Ascending aorta (tissue), 2 donors: ENCODE measurements at regions of chr15 and their contacts with region 1.

Region 1: GRCh38 chr15:72783563-72784237 is at the start of gene ADPGK:
- DNase-seq: peak; percentile 73 to 94
- H3K4me3 ChIP-seq: peak within 1 kb of the TSS; percentile 76 to 80
- H3K27ac ChIP-seq: peak within 1 kb of the TSS; percentile 94 to 96
- H3K4me1 ChIP-seq: peaks cover 2 to 23% of the 10 kb centered on the region in 2 donors
- H3K27me3 ChIP-seq: no peaks in the 10 kb centered on the region
- CTCF ChIP-seq: peak in 1 of 3 experiments; percentile 1
- total RNA-seq, gene ADPGK: 24.8 TPM

Region 2: GRCh38 chr15:72473614-72474465 is 309.9 kb before region 1 on chr15 and contains the start of gene ARIH1:
- intact Hi-C with region 1: loop called (anchors 10 kb)
- DNase-seq: peak; percentile 86 to 98
- H3K4me3 ChIP-seq: peak within 1 kb of the TSS; percentile 73 to 100
- H3K27ac ChIP-seq: peak within 1 kb of the TSS; percentile 97 to 100
- H3K4me1 ChIP-seq: peaks cover 0 to 41% of the 10 kb centered on the region in 2 donors
- H3K27me3 ChIP-seq: no peaks in the 10 kb centered on the region
- CTCF ChIP-seq: peak in 2 of 3 experiments; percentile 8 to 22
- total RNA-seq, gene ARIH1: 109 TPM

Region 3: GRCh38 chr15:73051811-73052678 is 268.3 kb after region 1 on chr15 and contains the start of gene NEO1:
- intact Hi-C with region 1: loop called (anchors 1 kb)
- DNase-seq: peak; percentile 49 to 90
- H3K4me3 ChIP-seq: peak within 1 kb of the TSS; percentile 84 to 87
- H3K27ac ChIP-seq: peak within 1 kb of the TSS; percentile 89 to 91
- H3K4me1 ChIP-seq: no peaks in the 10 kb centered on the region
- H3K27me3 ChIP-seq: no peaks in the 10 kb centered on the region
- CTCF ChIP-seq: peak in 1 of 3 experiments; percentile 13
- total RNA-seq, gene NEO1: 21.8 TPM

Region 4: GRCh38 chr15:73240866-73241499 is 457.3 kb after region 1 on chr15:
- intact Hi-C with region 1: loop called (anchors 10 kb)
- DNase-seq: peak in 1 of 2 donors; percentile 86
- H3K4me3 ChIP-seq: no peak overlapping the region
- H3K27ac ChIP-seq: no peak overlapping the region
- H3K4me1 ChIP-seq: peaks cover 0 to 7% of the 10 kb centered on the region in 2 donors
- H3K27me3 ChIP-seq: no peaks in the 10 kb centered on the region
- CTCF ChIP-seq: peak; percentile 68 to 90 (median 85)

Region 5: DNA sequence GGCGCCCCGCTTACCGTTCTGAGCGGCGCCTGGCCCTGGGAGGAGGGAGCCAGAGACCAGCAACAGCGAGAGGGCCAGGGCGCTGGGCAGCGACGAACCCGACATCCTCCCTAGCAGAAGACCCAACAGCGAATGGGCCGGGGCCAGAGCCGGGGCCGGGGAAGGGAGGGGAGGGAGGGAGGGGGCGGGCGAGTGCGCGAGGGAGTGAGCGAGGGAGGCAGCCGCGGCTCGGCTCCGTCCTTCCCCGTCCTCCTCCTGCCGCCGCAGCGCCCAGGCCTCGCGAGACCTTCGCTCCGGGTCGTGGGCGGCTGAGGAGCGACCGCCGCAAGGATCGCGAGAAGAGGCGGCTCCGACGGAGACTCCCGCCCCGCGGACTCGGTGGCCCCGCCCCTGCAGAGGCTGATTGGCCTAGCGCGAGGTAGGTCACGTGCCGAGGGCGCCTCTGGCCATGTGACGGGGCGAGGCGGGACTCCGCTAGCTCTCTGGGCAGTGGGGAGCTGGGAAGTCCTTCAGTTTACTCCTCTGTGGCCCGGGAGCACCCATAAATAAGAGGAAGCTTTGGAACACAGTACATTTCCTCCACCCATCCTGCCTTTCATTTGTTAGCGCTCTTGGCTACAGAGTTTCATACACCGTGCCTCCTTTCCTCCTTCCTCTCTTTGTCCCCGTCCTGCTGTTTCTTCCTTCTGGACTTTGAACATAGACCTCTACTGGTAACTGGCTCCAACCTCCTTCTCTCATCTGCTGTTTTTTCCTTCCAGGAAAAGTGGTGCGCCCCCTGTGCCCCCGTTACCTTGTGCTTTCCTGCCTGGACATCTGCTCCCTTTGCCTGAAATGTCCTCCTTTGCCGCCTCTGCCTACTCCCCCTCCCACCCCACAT is 849.7 kb after region 1 on chr15 and contains the start of gene NPTN:
- intact Hi-C with region 1: loop called (anchors 10 kb)
- DNase-seq: peak; percentile 94 to 99
- H3K4me3 ChIP-seq: peak within 1 kb of the TSS; percentile 85 to 98
- H3K27ac ChIP-seq: peak within 1 kb of the TSS; percentile 95 to 98
- H3K4me1 ChIP-seq: peaks cover 0 to 24% of the 10 kb centered on the region in 2 donors
- H3K27me3 ChIP-seq: no peaks in the 10 kb centered on the region
- CTCF ChIP-seq: no peak
- total RNA-seq, gene NPTN: 147 TPM